ENCODE measurements at regions of chr20 and their contacts with region 1.

Region 1: GRCh38 chr20:50189681-50190582 is 698 bp upstream of the CEBPB start:
- DNase-seq: no peak
- ATAC-seq: peak; percentile 69
- H3K4me3 Mint-ChIP-seq: peak overlapping the region; percentile 58
- H3K27ac Mint-ChIP-seq: no peak overlapping the region
- H3K4me1 Mint-ChIP-seq: peaks cover 27% of the 10 kb centered on the region
- H3K27me3 Mint-ChIP-seq: peaks cover 8% of the 10 kb centered on the region
- CTCF ChIP-seq: no peak

Region 2: DNA sequence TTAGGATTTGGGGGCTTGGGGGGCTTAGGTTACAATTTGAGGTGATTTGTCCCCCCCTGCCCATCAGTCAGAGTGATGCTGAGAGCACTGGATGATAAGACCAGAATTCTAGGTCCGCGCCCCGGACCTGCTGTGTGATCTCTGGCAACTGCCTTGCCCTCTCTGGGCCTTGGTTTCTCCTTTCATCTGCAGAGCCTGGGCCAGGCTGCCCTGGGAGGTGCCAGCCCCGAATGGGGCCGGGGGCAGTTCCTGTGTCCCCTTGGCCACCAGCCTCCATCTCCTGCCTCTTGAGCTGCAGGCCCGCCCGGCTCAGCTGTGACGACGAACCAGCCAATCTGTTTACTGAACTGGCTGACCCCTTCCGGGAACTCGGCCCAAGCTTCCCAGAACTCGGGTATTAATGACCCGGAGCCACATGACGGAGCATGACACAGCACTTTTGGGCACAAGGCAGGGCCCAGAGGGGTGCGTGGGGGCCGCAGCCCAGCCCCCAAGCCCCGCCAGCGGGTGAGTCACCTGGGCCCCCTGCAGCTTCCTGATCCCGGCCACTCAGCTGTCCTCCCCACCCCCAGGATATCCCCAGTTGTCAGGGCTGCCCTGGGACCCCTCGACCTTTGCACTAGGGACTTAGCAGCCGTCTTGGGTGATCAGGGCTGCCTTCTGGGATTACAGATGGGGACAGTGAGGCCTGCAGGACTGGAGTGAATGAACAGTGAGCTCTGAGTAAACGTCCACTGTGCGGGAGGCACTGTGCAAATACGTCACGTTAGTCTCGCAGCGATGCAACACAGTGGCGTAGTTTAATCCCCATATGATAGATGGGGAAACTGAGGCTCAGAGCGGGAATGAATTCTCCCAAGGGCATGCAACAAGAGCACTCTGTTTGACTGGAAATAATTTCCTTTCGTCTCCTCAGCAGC is 102.7 kb after region 1 on chr20:
- CTCF ChIA-PET with region 1: no interaction called
- POLR2A ChIA-PET with region 1: no interaction called
- intact Hi-C with region 1: no loop called
- DNase-seq: no peak
- ATAC-seq: no peak
- H3K4me3 Mint-ChIP-seq: no peak overlapping the region
- H3K27ac Mint-ChIP-seq: no peak overlapping the region
- H3K4me1 Mint-ChIP-seq: peaks cover 10% of the 10 kb centered on the region
- H3K27me3 Mint-ChIP-seq: peaks cover 23% of the 10 kb centered on the region
- CTCF ChIP-seq: no peak

Region 3: GRCh38 chr20:50346372-50347283 is 156.7 kb after region 1 on chr20:
- CTCF ChIA-PET with region 1: interaction called, 3 read pairs
- POLR2A ChIA-PET with region 1: interaction called, 3 read pairs
- intact Hi-C with region 1: loop called (anchors 2 kb)
- DNase-seq: no peak
- ATAC-seq: no peak
- H3K4me3 Mint-ChIP-seq: no peak overlapping the region
- H3K27ac Mint-ChIP-seq: no peak overlapping the region
- H3K4me1 Mint-ChIP-seq: peaks cover 21% of the 10 kb centered on the region
- H3K27me3 Mint-ChIP-seq: peaks cover 44% of the 10 kb centered on the region
- CTCF ChIP-seq: no peak

Region 4: GRCh38 chr20:50498081-50498776 is 308.3 kb after region 1 on chr20:
- CTCF ChIA-PET with region 1: no interaction called
- POLR2A ChIA-PET with region 1: no interaction called
- intact Hi-C with region 1: loop called (anchors 1 kb)
- DNase-seq: no peak
- ATAC-seq: peak; percentile 81
- H3K4me3 Mint-ChIP-seq: peak overlapping the region; percentile 71
- H3K27ac Mint-ChIP-seq: peak overlapping the region; percentile 99
- H3K4me1 Mint-ChIP-seq: peaks cover 49% of the 10 kb centered on the region
- H3K27me3 Mint-ChIP-seq: no peaks in the 10 kb centered on the region
- CTCF ChIP-seq: no peak

Region 5: GRCh38 chr20:50575847-50576720 is 386.2 kb after region 1 on chr20:
- CTCF ChIA-PET with region 1: interaction called, 8 read pairs
- POLR2A ChIA-PET with region 1: interaction called, 6 read pairs
- intact Hi-C with region 1: loop called (anchors 1 kb)
- DNase-seq: peak; percentile 52
- ATAC-seq: peak; percentile 84
- H3K4me3 Mint-ChIP-seq: no peak overlapping the region
- H3K27ac Mint-ChIP-seq: peak overlapping the region; percentile 77
- H3K4me1 Mint-ChIP-seq: peaks cover 55% of the 10 kb centered on the region
- H3K27me3 Mint-ChIP-seq: no peaks in the 10 kb centered on the region
- CTCF ChIP-seq: peak; percentile 48

Region 6: DNA sequence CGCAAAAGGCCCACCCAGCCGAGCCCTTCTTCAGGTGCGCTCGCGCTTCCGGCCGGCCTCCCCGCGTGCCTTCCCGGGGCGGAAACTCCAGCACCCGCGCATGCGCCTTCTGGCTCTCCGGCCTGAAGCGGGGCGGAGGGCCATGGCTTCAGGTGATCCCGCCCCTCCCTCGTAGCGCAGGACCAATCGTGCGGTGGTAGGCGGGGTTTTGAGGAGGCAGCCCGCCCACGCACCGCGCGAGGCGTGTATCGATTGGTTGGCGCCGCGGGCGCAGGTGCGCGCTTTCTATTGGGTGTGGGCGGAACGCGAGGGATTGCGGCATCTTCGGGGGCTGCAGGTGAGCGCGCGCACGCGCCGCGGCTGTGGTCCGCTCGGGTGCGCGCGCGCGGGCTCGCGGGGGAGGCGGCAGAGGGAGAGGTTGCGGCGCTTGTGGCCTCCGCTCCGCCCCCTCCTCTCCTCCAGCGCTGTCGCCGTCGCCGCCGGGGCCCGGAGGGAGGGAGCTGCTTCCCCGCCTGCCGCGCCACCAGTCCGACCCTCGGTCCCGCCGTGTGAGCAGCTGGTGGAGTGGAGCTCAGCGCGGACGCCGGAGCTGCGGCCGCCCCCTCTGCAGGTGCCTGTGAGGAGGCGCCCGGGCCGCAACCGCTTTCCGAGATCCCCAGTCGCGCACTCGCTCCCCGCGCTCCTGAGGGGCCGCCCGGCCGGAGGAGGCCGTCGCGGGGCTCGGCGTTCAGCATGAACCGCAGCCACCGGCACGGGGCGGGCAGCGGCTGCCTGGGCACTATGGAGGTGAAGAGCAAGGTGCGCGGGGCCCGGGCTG is 541.3 kb after region 1 on chr20 and contains the start of gene PARD6B:
- CTCF ChIA-PET with region 1: no interaction called
- POLR2A ChIA-PET with region 1: interaction called, 3 read pairs
- intact Hi-C with region 1: loop called (anchors 1 kb)
- DNase-seq: peak; percentile 98
- ATAC-seq: peak; percentile 94
- H3K4me3 Mint-ChIP-seq: peak within 1 kb of the TSS; percentile 89
- H3K27ac Mint-ChIP-seq: peak within 1 kb of the TSS; percentile 71
- H3K4me1 Mint-ChIP-seq: peaks cover 16% of the 10 kb centered on the region
- H3K27me3 Mint-ChIP-seq: peaks cover 2% of the 10 kb centered on the region
- CTCF ChIP-seq: no peak
- total RNA-seq, gene PARD6B: 3.8 and 5.7 TPM in 2 replicates

Region 7: DNA sequence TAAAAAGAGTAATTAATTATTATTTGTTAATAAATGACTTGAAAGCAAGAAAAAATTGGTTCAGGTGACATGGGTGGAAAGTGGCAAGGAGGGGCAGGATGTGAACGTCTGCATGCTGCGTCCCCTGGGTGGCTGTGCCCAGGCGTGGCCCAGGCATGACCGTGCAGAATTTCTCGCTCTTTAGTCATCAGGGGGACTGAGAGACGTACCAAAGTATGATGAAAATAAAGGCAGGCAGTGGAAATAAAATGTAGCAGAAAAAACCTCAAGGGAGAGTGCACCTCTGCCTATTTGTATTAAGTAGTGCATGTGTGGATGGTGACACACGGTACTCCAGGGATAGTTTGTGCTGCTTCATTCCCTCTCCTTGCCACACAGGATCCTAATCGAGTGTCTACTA is 1497.1 kb after region 1 on chr20:
- CTCF ChIA-PET with region 1: no interaction called
- POLR2A ChIA-PET with region 1: no interaction called
- intact Hi-C with region 1: no loop called
- DNase-seq: no peak
- ATAC-seq: no peak
- H3K4me3 Mint-ChIP-seq: no peak overlapping the region
- H3K27ac Mint-ChIP-seq: no peak overlapping the region
- H3K4me1 Mint-ChIP-seq: peaks cover 2% of the 10 kb centered on the region
- H3K27me3 Mint-ChIP-seq: peaks cover 7% of the 10 kb centered on the region
- CTCF ChIP-seq: no peak

Measured in activated B cell treated with CpG ODN at 0.5 μM for 24 hours (primary cell).